ENCODE measurements at regions of chr7 and their contacts with region 1.

Region 1: DNA sequence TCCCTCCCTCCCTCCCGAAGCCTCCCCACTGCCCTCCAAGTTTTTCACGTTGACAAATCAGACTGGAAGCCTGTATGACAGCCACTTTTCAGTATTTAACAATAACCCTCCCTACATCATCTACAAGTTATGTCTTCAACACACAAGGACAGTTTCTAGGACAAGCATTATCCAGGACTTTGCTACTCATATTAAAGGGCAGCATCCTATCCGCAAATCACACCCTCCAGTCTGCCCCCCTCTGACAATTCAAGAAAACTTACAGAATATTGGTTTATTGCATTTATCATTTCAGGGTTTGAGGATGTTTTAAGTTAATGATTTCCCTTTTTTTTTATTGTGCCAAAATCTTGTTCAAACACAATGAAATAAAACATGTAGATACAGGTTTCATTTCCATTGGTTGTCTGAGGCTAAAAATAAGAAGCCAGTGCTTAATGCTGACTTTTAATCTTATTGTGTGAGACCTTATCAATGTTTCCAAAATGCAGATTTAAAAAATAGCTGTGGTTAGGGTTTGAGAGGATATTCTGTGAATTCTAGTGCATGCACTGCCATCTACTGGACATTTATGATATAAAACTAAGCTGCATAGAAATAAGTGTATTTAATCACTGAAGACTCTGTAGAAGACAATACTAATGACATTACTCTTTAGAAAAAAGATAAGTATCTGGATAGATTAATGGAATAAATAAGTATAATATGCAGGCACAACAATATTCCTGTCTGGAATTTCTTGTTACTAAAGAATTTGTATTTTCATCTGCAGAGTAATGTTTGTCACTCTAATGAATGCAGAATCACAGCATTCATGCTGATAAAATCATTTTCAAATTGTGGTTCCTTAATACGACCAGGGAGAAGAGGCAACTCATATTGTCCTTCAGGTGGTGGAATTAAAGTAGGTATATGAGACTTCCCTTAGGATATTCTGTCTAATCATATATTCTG is 64.1 kb downstream of the CAV1 start:
- DNase-seq: no peak
- H3K4me3 ChIP-seq: no peak overlapping the region
- H3K27ac ChIP-seq: no peak overlapping the region
- H3K27me3 ChIP-seq: no peaks in the 10 kb centered on the region
- CTCF ChIP-seq: peak; percentile 46

Region 2: GRCh38 chr7:116173051-116174028 is 415.6 kb before region 1 on chr7:
- CTCF ChIA-PET with region 1: interaction called, 38 read pairs
- POLR2A ChIA-PET with region 1: no interaction called
- DNase-seq: peak; percentile 52
- H3K4me3 ChIP-seq: no peak overlapping the region
- H3K27ac ChIP-seq: no peak overlapping the region
- H3K27me3 ChIP-seq: no peaks in the 10 kb centered on the region
- CTCF ChIP-seq: peak; percentile 54

Region 3: GRCh38 chr7:116242178-116242577 is 346.7 kb before region 1 on chr7:
- CTCF ChIA-PET with region 1: interaction called, 56 read pairs
- POLR2A ChIA-PET with region 1: interaction called, 3 read pairs
- DNase-seq: no peak
- H3K4me3 ChIP-seq: no peak overlapping the region
- H3K27ac ChIP-seq: no peak overlapping the region
- H3K27me3 ChIP-seq: no peaks in the 10 kb centered on the region
- CTCF ChIP-seq: peak; percentile 44

Region 4: DNA sequence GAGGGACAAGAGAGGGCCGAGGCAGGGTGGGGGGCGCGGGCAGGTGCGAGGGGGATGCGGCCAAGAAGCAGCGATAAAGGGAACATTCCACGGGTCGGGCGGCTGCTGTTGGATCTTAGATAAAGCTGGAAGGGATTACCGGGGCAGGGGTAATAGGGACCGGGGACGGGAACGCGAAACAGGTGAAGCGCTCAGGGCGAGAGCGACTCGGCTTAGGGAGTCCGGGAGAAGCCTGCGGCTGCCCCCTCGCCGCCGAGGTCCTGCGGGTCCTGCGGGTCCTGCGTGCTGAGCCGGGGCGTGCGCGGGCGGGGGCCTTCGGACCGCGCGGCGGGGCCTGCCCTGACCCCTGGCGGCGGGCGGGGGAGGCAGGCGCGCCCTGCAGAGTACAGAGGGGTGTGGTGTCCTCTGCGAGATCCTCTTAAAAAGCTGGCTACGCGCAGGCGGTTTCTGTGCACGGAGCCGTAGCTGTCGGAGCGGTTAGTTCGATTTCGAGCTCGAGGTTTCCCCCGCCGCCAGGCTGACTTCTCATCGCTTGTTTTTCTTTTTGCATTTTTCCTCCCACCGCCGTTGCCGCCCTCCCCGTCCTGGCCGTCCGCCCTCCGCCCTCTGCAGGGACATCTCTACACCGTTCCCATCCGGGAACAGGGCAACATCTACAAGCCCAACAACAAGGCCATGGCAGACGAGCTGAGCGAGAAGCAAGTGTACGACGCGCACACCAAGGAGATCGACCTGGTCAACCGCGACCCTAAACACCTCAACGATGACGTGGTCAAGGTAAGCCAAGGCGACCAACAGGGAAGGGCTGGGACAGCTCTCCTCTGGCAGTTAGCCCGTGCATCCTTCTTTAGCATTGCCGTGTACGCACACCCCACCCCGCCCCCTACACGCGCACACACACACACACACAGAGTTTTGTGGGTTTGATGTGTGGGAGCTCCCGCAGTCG is 62.7 kb before region 1 on chr7:
- CTCF ChIA-PET with region 1: interaction called, 24 read pairs
- POLR2A ChIA-PET with region 1: interaction called, 10 read pairs
- DNase-seq: peak; percentile 64
- H3K4me3 ChIP-seq: peak overlapping the region; percentile 97
- H3K27ac ChIP-seq: peak overlapping the region; percentile 98
- H3K27me3 ChIP-seq: no peaks in the 10 kb centered on the region
- CTCF ChIP-seq: peak; percentile 51

Region 5: DNA sequence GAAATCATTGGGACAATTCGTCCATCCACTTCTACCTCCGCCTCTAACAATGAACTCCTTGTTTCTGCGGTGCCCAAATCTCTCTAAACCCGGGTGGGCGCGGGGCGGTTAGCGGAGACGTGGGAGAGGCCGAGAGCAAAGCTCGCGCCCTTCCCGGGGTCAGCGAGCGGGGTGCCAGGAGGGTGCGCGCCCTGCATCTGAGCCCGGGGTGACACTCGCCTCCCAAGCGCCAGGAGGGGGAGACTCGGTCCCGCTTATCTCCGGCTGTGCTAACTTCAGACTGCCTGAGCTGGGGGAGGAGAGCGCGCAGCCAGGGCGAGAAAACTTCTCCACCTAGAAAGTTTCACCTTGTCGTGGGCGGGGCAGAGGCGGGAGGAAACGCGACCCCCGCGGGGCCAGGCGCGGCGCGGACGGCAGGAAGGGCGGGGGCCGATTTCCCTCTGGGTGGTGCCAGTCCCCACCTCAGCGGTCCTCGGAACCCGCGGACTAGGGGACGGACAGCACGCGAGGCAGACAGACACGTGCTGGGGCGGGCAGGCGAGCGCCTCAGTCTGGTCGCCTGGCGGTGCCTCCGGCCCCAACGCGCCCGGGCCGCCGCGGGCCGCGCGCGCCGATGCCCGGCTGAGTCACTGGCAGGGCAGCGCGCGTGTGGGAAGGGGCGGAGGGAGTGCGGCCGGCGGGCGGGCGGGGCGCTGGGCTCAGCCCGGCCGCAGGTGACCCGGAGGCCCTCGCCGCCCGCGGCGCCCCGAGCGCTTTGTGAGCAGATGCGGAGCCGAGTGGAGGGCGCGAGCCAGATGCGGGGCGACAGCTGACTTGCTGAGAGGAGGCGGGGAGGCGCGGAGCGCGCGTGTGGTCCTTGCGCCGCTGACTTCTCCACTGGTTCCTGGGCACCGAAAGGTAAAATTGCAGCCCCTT is 83.0 kb after region 1 on chr7 and contains the start of gene MET:
- CTCF ChIA-PET with region 1: interaction called, 14 read pairs
- POLR2A ChIA-PET with region 1: no interaction called
- DNase-seq: peak; percentile 21
- H3K4me3 ChIP-seq: peak within 1 kb of the TSS; percentile 83
- H3K27ac ChIP-seq: peak within 1 kb of the TSS; percentile 25
- H3K27me3 ChIP-seq: no peaks in the 10 kb centered on the region
- CTCF ChIP-seq: peak; percentile 68
- polyA plus RNA-seq, gene MET: 15.5 and 20.8 TPM in 2 replicates